Activated naive CD4-positive, alpha-beta T cell treated with anti-CD3 and anti-CD28 coated beads for 36 hours (primary cell): ENCODE measurements at regions of chr16 and their contacts with region 1.

Region 1: DNA sequence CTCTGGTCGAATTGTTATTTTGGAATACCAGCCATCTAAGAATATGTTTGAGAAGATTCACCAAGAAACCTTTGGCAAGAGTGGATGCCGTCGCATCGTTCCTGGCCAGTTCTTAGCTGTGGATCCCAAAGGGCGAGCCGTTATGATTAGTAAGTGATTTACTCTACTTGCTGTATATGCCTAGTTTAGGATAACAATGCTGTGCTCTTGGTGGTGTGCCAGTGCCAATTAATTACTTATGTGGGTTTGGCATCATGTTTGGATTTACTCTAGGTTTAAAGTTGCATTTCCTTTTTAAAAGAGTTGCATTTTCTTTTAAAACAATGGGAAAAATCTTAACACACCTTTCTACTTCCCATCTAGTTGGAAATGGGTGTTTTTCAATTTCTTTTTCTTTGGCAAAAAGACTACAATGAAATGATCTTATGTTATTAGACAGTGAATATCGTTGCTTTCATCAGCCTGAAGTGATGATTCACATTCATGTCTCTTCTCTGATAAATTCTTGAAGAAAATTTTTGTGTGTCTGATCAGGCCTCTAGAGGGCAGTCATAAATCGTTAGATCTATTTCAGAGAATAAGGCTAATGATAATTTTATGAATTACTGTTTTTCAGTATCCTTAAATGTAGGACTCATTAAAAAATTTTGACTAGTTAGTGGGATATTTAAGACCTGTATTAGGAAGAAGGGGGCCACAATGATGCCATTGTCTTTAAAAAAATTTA is 5.6 kb downstream of the SF3B3 start:
- DNase-seq: no peak
- H3K4me3 Mint-ChIP-seq: peak overlapping the region; percentile 15
- H3K27ac Mint-ChIP-seq: peak overlapping the region; percentile 70
- H3K4me1 Mint-ChIP-seq: peaks cover 60% of the 10 kb centered on the region
- H3K27me3 Mint-ChIP-seq: no peaks in the 10 kb centered on the region

Region 2: GRCh38 chr16:70454222-70455034 is 74.8 kb before region 1 on chr16 and contains the start of gene FCSK:
- CTCF ChIA-PET with region 1: no interaction called
- intact Hi-C with region 1: no loop called
- DNase-seq: peak; percentile 62
- H3K4me3 Mint-ChIP-seq: peak within 1 kb of the TSS; percentile 86
- H3K27ac Mint-ChIP-seq: peak within 1 kb of the TSS; percentile 88
- H3K4me1 Mint-ChIP-seq: peaks cover 18% of the 10 kb centered on the region
- H3K27me3 Mint-ChIP-seq: no peaks in the 10 kb centered on the region
- total RNA-seq, gene FCSK: 12.2 to 12.6 TPM

Region 3: DNA sequence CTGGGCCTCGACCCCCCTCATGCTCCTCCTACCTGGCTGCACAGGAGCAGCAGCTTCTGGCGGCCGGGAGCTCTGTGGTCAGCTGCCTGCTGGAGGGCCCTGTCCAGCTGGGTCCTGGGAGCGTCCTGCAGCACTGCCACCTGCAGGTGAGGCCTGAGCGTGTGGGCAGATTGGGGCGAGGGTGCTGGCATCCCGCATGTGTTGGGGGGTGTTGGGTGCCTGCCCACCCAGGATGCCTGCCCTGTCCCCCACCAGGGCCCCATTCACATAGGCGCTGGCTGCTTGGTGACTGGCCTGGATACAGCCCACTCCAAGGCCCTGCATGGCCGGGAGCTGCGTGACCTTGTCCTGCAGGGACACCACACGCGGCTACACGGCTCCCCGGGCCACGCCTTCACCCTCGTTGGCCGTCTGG is 58.3 kb before region 1 on chr16:
- CTCF ChIA-PET with region 1: no interaction called
- intact Hi-C with region 1: no loop called
- DNase-seq: no peak
- H3K4me3 Mint-ChIP-seq: no peak overlapping the region
- H3K27ac Mint-ChIP-seq: no peak overlapping the region
- H3K4me1 Mint-ChIP-seq: no peaks in the 10 kb centered on the region
- H3K27me3 Mint-ChIP-seq: no peaks in the 10 kb centered on the region

Region 4: GRCh38 chr16:70561623-70562022 is 32.4 kb after region 1 on chr16:
- CTCF ChIA-PET with region 1: interaction called, 5 read pairs
- intact Hi-C with region 1: loop called (anchors 5 kb)
- DNase-seq: no peak
- H3K4me3 Mint-ChIP-seq: no peak overlapping the region
- H3K27ac Mint-ChIP-seq: peak overlapping the region; percentile 2
- H3K4me1 Mint-ChIP-seq: peaks cover 3% of the 10 kb centered on the region
- H3K27me3 Mint-ChIP-seq: no peaks in the 10 kb centered on the region